Head of caudate nucleus (tissue), 42 donors: ENCODE measurements at regions of chr2 and their contacts with region 1.

Region 1: DNA sequence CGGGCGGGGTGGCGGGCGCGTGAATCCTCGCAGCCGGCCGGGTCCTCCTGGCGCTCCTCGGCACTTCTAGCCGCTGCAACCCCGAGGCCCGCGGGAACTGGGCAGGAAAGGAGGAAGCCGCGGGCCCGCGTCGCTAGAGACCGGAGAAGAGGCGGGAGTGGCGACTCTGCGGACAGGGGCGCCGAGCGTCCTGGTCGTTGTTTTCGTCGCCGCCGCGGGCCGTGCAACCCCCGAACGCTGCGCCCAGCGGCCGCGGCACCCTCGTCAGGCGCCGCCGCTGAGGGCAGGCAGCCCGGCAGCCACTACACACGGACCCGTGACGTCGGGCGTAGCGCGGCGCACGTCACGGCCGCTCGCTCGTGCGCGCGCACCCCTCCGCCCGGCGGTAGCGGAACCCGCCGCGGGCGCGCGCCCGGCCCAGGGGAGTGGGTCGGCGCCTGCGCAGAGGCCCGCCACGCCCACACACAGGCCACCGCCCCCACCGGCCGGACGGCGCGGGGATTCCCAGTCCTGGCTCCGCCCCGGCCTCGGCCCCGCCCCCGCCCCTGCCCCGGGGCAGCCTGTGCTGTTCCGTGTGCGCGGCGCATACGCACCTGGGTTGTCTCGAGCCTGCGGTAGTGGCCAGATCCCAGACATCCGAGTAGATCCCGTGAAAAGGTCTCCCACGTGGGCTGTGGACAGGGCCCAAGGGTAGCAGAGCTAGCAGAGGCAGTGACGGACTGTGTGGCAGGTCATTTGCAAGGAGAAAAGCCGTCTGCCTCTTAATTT is at the start of gene MAP3K2:
- DNase-seq: peak; percentile 63 to 94 (median 88)

Region 2: DNA sequence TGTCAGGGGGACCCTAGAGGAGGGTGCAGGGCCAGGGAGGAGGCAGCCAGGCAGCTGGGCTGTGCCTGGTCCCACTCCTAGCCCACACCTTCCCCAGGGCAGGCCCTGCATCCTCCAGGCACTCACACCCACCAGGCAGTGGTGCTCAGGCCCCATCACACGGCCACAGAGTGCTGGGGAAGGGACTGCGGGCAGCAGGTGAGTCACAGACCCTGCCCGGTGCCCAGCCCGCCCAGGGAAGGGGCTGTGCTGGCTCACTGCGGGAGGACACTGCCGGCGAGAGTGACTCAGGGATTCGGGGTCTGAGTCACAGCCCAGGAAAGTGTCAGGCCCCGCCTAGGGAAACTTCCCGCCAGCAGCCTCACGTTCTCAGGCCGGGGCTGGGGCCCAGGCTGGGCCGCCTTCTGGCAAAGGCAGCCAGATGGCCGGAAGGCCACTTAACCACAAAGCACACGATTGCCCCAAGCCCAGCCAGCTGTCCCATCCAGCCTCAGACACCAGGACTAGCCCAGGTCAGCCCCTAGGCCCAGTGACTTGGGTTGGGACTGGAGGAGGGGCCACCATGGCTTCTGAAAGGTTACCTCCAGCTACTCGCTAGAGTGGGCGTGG is 323.1 kb before region 1 on chr2:
- intact Hi-C with region 1: loop called (anchors 10 kb)
- DNase-seq: peak in 28 of 42 donors; percentile 38 to 85 (median 64)

Region 3: DNA sequence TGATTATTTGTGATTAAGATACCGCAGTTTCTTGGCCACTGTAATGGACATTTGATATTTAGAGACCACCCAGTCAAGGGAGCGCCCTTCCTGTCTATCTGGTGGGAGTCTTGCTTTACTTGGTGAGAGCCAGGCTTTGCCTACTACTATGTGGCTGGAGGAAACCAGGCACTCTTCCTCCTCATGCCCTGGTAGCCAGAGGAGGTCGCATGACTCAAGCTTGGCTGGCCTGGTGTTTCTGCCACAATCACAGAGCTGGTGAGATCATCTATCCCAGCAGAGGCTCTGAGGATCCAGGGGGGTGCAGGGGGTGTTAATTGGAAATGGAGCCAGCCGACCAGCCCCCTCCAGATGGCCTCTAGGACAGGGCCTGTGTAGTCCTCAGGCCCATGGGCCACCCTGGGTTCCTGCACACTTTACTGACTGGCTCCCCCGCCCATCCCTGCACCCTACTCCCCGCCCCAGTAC is 234.1 kb before region 1 on chr2:
- intact Hi-C with region 1: no loop called
- DNase-seq: peak in 40 of 42 donors; percentile 56 to 93 (median 80)

Region 4: GRCh38 chr2:127408004-127408806 is 20.4 kb after region 1 on chr2:
- intact Hi-C with region 1: loop called (anchors 2 kb)
- DNase-seq: peak; percentile 65 to 96 (median 92)

Region 5: GRCh38 chr2:127526149-127527000 is 138.5 kb after region 1 on chr2 and contains the start of gene IWS1:
- intact Hi-C with region 1: loop called (anchors 10 kb)
- DNase-seq: peak; percentile 90 to 98 (median 96)